Cardiac septum (tissue), 1 donor: ENCODE measurements at regions of chr21 and their contacts with region 1.

Region 1: DNA sequence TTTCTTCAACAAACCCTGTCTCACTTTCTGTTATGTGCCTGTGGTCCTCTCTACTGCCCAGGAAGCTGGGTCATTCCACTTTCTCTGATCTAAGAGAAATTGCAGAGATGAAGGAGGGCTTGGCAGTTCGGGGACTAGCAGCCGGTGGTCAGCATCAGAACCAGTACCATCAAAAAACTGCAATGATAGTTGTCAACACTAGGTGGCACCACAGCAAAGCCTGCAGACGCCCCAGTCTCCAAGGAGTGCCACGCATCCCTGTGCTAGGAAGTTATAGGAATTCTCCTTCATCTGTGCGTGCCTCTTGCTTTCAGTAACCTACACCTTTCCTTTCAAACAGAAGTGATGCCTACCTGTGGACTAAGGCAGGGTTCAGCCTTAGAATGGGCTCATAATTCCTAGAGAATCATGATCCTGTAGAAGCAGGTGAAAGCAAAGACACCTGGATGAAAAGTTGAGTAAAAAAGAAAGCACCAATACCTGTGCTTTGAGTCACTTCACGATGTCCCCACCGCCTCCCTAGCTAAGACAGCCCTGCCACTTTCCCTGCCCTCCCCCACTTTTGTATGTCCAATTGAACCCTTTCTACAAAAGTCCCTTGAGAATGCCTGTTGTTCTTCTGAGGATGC is 129.2 kb downstream of the ADAMTS1 start:
- DNase-seq: no peak

Region 2: DNA sequence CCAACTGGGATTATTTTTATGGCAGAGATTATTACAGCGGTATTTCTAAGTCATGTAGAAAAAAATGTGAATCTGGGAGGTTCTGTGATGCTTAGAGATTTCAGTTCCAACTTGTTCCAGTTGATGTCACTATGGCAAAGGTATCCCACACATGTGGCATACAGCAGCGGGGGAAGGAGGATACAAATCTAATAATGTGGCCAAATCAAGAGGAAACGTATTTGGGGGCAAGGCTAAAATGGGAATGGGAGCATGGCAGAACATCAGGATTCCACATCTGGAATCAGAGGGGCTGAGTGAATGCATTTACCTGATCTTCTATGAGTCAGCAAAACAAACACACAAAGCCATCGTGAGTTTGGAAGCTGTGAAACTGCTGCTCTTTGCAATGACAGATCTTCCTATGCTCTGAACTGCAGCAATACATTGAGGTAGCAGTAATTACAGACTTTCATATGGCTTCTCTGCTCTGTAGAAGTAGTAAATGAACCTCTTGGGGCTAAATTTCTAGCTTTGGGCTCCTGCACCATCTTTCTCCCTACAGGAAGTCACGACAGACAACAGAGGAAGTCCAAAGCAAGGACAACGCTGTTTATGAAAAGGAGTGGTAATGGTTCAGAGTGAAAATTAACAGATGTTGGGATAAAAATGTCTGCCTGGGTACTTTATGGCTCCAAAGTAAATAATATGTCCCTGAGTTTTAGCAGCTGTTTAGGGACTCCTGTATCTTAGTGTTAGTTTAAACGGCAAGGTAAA is 925.7 kb before region 1 on chr21:
- intact Hi-C with region 1: loop called (anchors 10 kb)
- DNase-seq: no peak

Region 3: DNA sequence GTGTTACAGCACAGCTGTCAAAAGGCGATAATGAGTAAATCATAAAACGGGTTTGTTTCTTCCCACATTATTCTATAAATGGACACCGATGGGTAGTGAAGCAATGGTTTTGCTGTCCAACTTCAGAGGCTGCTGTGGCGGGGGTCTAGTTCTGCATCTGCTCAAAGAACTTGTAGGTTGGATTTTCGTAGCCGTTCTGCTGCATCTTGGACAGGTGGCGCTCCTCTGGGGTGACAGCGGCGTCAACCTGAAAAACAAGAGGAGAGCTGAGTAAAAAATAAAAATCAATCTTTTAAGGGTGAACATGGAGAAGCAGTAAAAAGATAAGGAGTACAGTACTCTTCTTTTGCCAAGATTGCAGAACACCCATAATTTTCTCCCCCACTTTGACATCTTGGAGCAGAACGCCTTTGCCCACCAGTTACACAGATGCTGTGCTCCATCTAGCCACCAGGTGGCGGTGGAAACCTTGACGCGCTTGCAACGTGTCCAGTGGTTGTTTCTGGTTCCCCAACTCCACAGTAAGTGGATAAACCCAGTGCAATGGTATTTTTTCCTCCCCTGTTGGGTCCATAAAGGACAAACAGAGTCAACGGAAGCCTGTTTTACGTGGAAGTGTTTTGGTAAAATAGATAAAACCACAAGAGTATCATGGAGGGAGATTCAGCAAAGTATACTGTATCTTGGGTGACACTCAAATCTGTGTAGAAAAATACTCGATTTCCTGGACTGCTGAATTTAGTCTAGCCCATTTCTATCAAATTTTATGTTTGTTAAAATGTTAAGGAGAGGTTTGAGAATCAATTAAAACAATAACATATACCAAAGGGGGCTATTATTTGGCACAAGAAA is 834.2 kb before region 1 on chr21:
- intact Hi-C with region 1: loop called (anchors 2 kb)
- DNase-seq: peak; percentile 82